ENCODE measurements at regions of chr1 and their contacts with region 1.

Region 1: GRCh38 chr1:156090822-156091188 is 8.5 kb upstream of the MEX3A start:
- DNase-seq: no peak
- H3K4me3 ChIP-seq: no peak overlapping the region
- CTCF ChIP-seq: peak; percentile 72

Region 2: DNA sequence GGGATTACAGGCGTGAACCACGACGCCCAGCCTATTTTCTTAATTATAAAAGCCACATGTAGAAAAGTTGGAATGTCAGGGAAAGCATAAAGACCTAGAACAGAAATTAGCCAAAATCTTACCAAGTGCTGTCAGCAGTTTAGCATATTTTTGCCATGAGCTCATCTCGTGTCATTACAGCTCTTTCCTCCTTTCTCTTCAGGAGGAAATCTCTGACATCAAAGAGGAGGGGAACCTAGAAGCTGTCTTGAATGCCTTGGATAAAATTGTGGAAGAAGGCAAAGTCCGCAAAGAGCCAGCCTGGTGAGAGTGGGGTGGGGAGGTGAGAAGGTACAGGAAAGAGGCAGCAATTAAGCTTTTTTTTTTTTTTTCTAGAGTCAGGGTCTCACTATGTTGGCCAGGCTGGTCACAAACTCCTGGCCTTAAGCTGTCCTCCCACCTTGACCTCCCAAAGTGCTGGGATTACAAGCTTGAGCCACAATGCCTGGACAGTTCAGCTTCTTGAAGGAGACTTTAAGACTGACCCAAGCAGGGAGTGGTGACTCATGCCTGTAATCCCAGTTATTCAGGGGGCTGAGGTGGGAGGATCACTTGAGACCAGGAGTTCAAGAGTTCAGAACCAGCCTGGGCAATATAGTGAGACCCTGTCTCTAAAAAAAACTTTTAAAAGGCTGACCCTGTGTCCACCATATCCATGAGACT is 142.8 kb after region 1 on chr1:
- CTCF ChIA-PET with region 1: interaction called, 340 read pairs
- POLR2A ChIA-PET with region 1: interaction called, 3 read pairs
- DNase-seq: peak; percentile 63
- H3K4me3 ChIP-seq: no peak overlapping the region
- CTCF ChIP-seq: no peak

Measured in AG04449 (cell line).